Activated T-helper 2 cell treated with anti-CD3 and anti-CD28 coated beads, Interferon-gamma antibody, Interleukin-2, Interleukin-4, amounts not matched to agents 10 μg/mL and 5 μg/mL and 100 μg/mL, durations not matched to agents 14 hours and 24 hours and 36 hours (primary cell): ENCODE measurements at regions of chr7 and their contacts with region 1.

Region 1: GRCh38 chr7:144936314-144936713 is 100.5 kb upstream of the TPK1 start:
- DNase-seq: no peak
- H3K4me3 Mint-ChIP-seq: no peak overlapping the region
- H3K27ac Mint-ChIP-seq: no peak overlapping the region
- H3K4me1 Mint-ChIP-seq: no peaks in the 10 kb centered on the region
- H3K27me3 Mint-ChIP-seq: peaks cover 3% of the 10 kb centered on the region

Region 2: DNA sequence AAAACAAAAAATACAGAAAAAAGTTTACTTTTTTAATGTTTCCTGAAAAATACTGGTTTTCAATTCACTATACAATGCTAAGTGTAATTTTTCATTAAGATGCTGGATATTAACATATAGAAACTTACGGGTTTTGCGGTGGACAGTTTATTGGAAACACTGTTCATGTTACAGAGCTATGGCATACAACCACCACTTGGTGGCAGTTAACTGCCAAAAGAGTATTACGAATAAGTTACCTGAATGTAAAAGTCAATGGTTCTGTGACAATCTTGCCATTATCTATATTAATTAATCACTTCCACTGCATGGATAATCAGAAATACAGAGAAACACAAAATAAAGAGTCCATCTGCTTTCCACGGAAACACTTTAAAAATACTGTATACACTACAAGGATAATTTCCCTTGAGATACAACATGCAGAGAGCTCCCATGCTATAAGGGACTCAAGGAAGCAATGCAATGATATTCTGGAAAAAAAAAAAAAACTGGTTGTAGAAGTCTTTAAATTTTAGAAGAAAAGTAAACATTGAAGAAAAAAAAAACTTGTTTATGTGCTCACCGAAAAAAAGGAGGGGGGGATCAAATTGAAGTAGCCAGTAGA is 197.5 kb before region 1 on chr7:
- intact Hi-C with region 1: loop called (anchors 10 kb)
- DNase-seq: no peak
- H3K4me3 Mint-ChIP-seq: no peak overlapping the region
- H3K27ac Mint-ChIP-seq: no peak overlapping the region
- H3K4me1 Mint-ChIP-seq: no peaks in the 10 kb centered on the region
- H3K27me3 Mint-ChIP-seq: no peaks in the 10 kb centered on the region

Region 3: DNA sequence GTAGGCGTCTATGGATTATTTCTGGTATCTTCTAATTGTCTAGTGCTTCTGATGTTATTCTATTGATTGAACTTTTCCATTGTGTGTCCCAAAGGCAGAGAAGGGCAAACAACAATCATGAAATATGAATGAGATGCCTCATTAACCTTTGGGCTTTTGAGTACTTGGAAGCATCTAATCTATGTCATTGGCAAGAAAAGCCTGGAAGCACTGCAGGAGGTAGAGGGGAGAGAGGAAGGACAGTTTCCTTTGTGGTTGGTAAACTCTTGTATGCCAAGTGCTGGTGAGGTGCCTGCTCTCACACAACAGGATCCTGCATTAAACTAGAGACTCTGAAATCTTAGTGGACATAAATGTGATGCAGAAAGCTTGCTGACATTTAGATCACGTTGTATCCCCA is 54.7 kb after region 1 on chr7:
- intact Hi-C with region 1: no loop called
- DNase-seq: no peak
- H3K4me3 Mint-ChIP-seq: no peak overlapping the region
- H3K27ac Mint-ChIP-seq: no peak overlapping the region
- H3K4me1 Mint-ChIP-seq: no peaks in the 10 kb centered on the region
- H3K27me3 Mint-ChIP-seq: no peaks in the 10 kb centered on the region